A673 (cell line): ENCODE measurements at regions of chr2 and their contacts with region 1.

Region 1: DNA sequence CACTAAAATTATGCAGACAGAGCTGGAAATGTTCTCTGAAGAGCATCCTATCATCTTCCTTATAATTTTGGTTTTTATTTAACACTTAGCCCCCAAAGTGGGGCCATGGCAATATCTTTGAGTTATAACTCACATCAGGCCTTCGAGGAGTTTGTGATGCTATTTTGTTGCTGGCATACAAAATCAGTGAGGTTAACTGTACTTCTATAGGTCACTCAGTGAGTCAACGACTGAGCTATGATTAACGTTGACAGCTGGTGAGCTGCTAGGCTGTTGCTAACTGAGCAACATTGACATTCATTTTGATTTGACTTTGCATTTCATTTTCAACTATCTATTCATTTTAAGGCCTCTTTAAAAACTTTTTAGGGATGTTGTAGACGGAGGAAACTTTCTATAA is 50.0 kb downstream of the GPD2 start:
- DNase-seq: no peak
- H3K4me3 ChIP-seq: no peak overlapping the region
- H3K27ac ChIP-seq: no peak overlapping the region
- H3K4me1 ChIP-seq: peaks cover 9% of the 10 kb centered on the region
- H3K27me3 ChIP-seq: no peaks in the 10 kb centered on the region
- CTCF ChIP-seq: no peak

Region 2: GRCh38 chr2:156341452-156342253 is 144.5 kb before region 1 on chr2:
- CTCF ChIA-PET with region 1: no interaction called
- POLR2A ChIA-PET with region 1: no interaction called
- intact Hi-C with region 1: no loop called
- DNase-seq: peak; percentile 97
- H3K4me3 ChIP-seq: peak overlapping the region; percentile 88
- H3K27ac ChIP-seq: peak overlapping the region; percentile 100
- H3K4me1 ChIP-seq: peaks cover 42% of the 10 kb centered on the region
- H3K27me3 ChIP-seq: no peaks in the 10 kb centered on the region
- CTCF ChIP-seq: no peak

Region 3: GRCh38 chr2:156466739-156467405 is 19.3 kb before region 1 on chr2:
- CTCF ChIA-PET with region 1: no interaction called
- POLR2A ChIA-PET with region 1: interaction called, 10 read pairs
- intact Hi-C with region 1: no loop called
- DNase-seq: no peak
- H3K4me3 ChIP-seq: no peak overlapping the region
- H3K27ac ChIP-seq: no peak overlapping the region
- H3K4me1 ChIP-seq: no peaks in the 10 kb centered on the region
- H3K27me3 ChIP-seq: no peaks in the 10 kb centered on the region
- CTCF ChIP-seq: no peak

Region 4: DNA sequence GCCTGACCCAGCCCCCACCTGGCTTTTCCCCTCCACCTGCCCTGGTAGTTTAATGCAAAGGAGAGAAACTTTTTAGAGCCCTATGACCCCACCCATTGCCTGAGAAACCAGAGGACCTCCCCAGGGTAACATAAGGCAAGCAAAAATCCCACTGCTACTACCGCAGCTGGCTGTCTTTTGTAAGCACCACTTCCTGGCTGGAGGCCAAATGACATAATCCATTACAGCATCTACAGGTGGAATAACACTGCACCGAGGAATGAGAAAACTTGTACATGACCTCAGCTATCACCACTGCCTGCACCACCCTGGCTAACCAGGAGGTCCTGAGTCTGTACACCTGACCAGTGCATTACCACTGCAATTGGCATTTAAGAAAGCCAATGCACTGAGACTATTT is 621.7 kb after region 1 on chr2:
- CTCF ChIA-PET with region 1: no interaction called
- POLR2A ChIA-PET with region 1: no interaction called
- intact Hi-C with region 1: no loop called
- DNase-seq: peak; percentile 19
- H3K4me3 ChIP-seq: no peak overlapping the region
- H3K27ac ChIP-seq: no peak overlapping the region
- H3K4me1 ChIP-seq: no peaks in the 10 kb centered on the region
- H3K27me3 ChIP-seq: no peaks in the 10 kb centered on the region
- CTCF ChIP-seq: no peak